ENCODE measurements at regions of chr10 and their contacts with region 1.

Region 1: DNA sequence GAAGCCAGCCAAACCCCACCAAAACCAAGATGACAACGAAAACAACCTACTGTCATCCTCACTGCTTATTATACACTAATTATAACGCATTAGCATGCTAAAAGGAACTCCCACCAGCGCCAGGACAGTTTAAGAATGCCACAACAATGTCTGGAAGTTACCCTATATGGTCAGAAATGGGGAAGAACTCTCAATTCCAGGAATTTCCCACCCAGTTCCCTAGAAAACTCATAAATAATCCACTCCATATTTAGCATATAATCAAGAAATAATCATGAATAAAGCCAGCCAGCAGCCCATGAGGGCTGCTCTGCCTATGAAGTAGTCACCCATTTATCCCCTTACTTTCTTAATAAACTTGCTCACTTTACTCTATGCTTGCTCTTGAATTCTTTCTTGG is 20.8 kb downstream of the MICU1 start:
- DNase-seq: no peak
- H3K4me3 ChIP-seq: no peak overlapping the region
- H3K27ac ChIP-seq: no peak overlapping the region
- H3K4me1 ChIP-seq: no peaks in the 10 kb centered on the region
- H3K27me3 ChIP-seq: no peaks in the 10 kb centered on the region
- CTCF ChIP-seq: no peak
- POLR2A ChIP-seq: no peak

Region 2: GRCh38 chr10:72375585-72375984 is 229.5 kb before region 1 on chr10:
- intact Hi-C with region 1: loop called (anchors 10 kb)
- DNase-seq: no peak
- H3K4me3 ChIP-seq: no peak overlapping the region
- H3K27ac ChIP-seq: no peak overlapping the region
- H3K4me1 ChIP-seq: no peaks in the 10 kb centered on the region
- H3K27me3 ChIP-seq: no peaks in the 10 kb centered on the region
- CTCF ChIP-seq: no peak
- POLR2A ChIP-seq: no peak

Region 3: DNA sequence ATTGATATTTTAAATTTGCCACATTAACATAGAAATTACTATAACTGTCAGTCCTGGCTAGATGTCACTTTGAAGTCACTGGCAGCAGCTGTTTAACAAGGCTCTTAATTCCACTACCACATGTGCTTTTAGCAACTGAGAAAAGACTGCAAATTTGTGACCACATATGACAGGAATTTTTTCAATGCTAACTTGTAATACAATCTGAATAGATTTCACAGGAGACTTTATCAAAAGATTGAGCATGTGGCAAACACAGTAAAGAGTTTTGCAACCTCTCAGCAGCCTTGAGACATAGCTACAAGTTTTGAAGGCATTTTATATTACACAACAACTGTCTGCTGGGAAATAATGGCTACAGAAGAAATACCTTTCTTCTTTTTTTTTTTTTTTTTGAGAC is 52.3 kb before region 1 on chr10:
- intact Hi-C with region 1: no loop called
- DNase-seq: no peak
- H3K4me3 ChIP-seq: no peak overlapping the region
- H3K27ac ChIP-seq: no peak overlapping the region
- H3K4me1 ChIP-seq: no peaks in the 10 kb centered on the region
- H3K27me3 ChIP-seq: no peaks in the 10 kb centered on the region
- CTCF ChIP-seq: no peak
- POLR2A ChIP-seq: no peak